ENCODE measurements at regions of chr1 and their contacts with region 1.

Region 1: DNA sequence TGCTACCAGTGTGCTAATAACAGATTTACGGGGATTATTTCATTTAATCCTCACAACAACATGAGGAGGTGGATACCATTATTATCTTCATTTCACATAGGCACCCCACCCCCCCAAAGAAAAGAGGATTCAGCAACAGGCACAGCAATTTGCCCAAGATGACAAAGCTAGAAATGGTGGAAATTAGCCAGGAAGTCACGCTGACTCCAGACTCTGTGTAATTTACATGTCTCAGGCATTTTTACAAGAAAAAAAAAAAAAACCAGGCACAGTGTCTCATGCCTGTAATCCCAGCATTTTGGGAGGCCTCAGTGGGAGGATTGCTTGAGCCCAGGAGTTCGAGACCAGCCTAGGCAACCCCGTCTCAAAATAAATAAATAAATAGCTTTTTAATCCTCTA is 37.5 kb upstream of the PRDM2 start:
- DNase-seq: peak; percentile 54
- ATAC-seq: 0 out of 2 replicates have a peak, but pooled peaks have one; percentile 15
- H3K4me3 ChIP-seq: no peak overlapping the region
- H3K27ac ChIP-seq: no peak overlapping the region
- H3K4me1 ChIP-seq: peaks cover 23% of the 10 kb centered on the region
- H3K27me3 ChIP-seq: no peaks in the 10 kb centered on the region
- CTCF ChIP-seq: no peak

Region 2: DNA sequence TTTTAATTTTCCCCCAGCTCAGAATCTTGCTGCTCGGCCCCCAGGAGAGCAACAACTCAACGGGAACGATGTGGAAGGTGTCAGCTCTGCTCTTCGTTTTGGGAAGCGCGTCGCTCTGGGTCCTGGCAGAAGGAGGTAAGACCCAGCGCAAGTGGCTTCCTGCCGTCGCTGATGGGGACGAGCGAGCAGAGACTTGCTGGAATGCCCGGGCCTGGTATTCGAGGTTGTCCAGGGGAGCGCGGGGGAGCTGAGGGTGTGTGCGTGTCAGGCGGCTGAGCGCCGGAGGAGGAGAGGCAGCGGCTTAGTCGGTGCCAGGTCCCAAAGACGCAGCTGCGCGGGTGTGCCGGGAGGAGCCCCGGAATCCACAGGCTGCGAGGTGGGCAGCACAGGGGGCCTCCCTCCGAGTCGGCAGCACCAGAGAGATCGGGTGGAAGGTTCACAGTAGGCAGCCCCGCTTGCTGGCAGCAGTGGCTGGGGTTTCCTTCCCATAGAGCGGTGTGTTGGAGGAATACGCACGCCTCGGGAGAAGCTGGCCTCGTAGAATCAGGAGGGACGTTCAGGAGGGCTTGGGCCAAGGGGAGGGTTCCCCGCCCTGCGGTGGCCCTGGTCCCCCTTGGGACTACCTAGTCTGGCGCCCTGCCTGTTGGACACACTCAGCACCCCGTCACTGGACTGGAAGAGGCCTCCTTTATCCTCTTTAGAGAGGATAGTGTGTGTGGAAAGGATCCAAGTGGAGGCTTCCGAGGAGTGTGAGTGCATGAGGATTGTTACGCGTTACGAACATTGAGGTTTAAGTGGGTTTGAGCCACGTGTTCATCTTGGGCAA is 78.3 kb before region 1 on chr1:
- CTCF ChIA-PET with region 1: no interaction called
- POLR2A ChIA-PET with region 1: no interaction called
- intact Hi-C with region 1: no loop called
- DNase-seq: no peak
- ATAC-seq: no peak
- H3K4me3 ChIP-seq: no peak overlapping the region
- H3K27ac ChIP-seq: no peak overlapping the region
- H3K4me1 ChIP-seq: no peaks in the 10 kb centered on the region
- H3K27me3 ChIP-seq: peaks cover 54% of the 10 kb centered on the region
- CTCF ChIP-seq: no peak

Region 3: DNA sequence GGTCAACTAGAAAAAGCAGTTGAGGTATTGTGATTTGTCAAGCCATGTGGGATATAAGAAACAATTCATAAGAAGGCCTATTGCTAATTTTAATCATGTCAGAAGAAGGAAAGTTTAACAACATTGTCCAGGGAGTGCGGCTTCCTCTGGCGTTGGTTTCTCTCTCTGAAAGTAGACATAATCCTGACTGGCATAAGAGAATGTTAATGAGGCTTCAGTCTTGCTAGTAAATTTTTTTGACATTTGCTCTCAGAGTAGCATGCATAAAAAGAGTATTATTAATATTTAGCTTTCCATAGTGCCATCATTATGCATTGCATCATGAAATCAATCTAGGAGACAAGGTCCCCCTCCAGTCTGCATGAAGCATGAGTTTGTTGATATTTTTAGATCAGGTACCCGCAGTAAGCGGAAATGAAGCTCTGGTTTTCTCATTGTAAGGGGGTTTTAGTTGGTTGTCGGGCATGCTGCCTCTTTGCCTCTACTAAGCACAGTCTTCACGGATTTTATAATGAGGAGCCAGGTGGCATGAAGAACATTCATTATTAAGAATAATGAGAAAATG is 24.7 kb after region 1 on chr1:
- CTCF ChIA-PET with region 1: no interaction called
- POLR2A ChIA-PET with region 1: no interaction called
- intact Hi-C with region 1: loop called (anchors 1 kb)
- DNase-seq: no peak
- ATAC-seq: no peak
- H3K4me3 ChIP-seq: no peak overlapping the region
- H3K27ac ChIP-seq: no peak overlapping the region
- H3K4me1 ChIP-seq: no peaks in the 10 kb centered on the region
- H3K27me3 ChIP-seq: peaks cover 5% of the 10 kb centered on the region; the same call in 1 of the 2 replicates
- CTCF ChIP-seq: no peak

Region 4: DNA sequence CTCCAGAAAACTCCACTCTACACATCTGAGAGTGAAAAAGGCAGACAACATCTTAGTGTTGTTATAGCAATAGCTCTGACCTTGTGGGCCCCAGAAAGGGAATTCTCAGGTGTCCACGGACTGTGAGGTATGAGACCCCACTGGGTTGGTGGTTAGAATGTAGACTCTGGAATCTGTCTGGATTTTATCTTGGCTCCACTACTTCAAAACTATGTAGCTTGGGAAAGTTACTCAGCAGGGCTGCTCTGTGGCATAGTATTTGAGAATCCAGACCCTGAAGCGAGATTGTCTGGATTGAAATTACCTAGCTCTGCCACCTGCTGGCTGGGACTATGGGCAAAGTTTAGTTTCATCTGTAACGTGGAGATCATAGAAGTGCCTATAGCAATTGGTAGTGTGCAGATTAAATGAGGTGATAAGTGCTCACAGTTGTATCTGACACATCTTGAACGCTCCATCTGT is 63.3 kb after region 1 on chr1:
- CTCF ChIA-PET with region 1: no interaction called
- POLR2A ChIA-PET with region 1: interaction called, 4 read pairs
- intact Hi-C with region 1: loop called (anchors 1 kb)
- DNase-seq: peak; percentile 60
- ATAC-seq: peak; percentile 90
- H3K4me3 ChIP-seq: no peak overlapping the region
- H3K27ac ChIP-seq: no peak overlapping the region
- H3K4me1 ChIP-seq: no peaks in the 10 kb centered on the region
- H3K27me3 ChIP-seq: no peaks in the 10 kb centered on the region
- CTCF ChIP-seq: peak; percentile 73

Region 5: DNA sequence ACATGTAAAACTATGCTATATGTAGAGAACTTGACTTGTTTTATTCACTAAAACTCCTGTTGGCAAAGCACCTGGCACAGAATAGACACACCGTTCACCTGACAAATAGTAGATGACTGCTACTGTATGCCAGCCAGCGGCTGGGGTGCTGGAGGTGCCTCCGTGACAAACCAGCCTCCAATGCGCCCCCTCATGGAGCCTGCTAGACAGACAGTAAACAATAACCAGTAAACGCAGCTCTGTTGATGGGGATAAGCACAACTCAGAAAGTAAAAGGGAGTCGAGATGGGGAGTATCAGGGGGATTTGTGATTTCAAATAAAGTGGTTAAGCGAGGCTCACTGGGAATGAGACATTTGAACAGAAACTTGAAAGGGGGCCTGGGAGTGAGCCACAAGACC is 144.7 kb after region 1 on chr1:
- CTCF ChIA-PET with region 1: no interaction called
- POLR2A ChIA-PET with region 1: no interaction called
- intact Hi-C with region 1: loop called (anchors 2 kb)
- DNase-seq: peak; percentile 52
- ATAC-seq: peak; percentile 52; the same call in 1 of the 2 replicates
- H3K4me3 ChIP-seq: no peak overlapping the region
- H3K27ac ChIP-seq: no peak overlapping the region
- H3K4me1 ChIP-seq: no peaks in the 10 kb centered on the region
- H3K27me3 ChIP-seq: no peaks in the 10 kb centered on the region
- CTCF ChIP-seq: peak; percentile 72

Region 6: GRCh38 chr1:13828454-13829151 is 166.1 kb after region 1 on chr1:
- CTCF ChIA-PET with region 1: no interaction called
- POLR2A ChIA-PET with region 1: no interaction called
- intact Hi-C with region 1: loop called (anchors 1 kb)
- DNase-seq: peak; percentile 58
- ATAC-seq: peak; percentile 74
- H3K4me3 ChIP-seq: no peak overlapping the region
- H3K27ac ChIP-seq: no peak overlapping the region
- H3K4me1 ChIP-seq: peaks cover 7% of the 10 kb centered on the region
- H3K27me3 ChIP-seq: no peaks in the 10 kb centered on the region
- CTCF ChIP-seq: peak; percentile 78

Region 7: GRCh38 chr1:13960375-13960987 is 298.0 kb after region 1 on chr1:
- CTCF ChIA-PET with region 1: no interaction called
- POLR2A ChIA-PET with region 1: no interaction called
- intact Hi-C with region 1: loop called (anchors 1 kb)
- DNase-seq: peak; percentile 84
- ATAC-seq: peak; percentile 84
- H3K4me3 ChIP-seq: no peak overlapping the region
- H3K27ac ChIP-seq: no peak overlapping the region
- H3K4me1 ChIP-seq: no peaks in the 10 kb centered on the region
- H3K27me3 ChIP-seq: no peaks in the 10 kb centered on the region
- CTCF ChIP-seq: peak; percentile 93

Measured in PC-3 (cell line).